GM12878 (cell line): ENCODE measurements at regions of chr11 and their contacts with region 1.

Region 1: DNA sequence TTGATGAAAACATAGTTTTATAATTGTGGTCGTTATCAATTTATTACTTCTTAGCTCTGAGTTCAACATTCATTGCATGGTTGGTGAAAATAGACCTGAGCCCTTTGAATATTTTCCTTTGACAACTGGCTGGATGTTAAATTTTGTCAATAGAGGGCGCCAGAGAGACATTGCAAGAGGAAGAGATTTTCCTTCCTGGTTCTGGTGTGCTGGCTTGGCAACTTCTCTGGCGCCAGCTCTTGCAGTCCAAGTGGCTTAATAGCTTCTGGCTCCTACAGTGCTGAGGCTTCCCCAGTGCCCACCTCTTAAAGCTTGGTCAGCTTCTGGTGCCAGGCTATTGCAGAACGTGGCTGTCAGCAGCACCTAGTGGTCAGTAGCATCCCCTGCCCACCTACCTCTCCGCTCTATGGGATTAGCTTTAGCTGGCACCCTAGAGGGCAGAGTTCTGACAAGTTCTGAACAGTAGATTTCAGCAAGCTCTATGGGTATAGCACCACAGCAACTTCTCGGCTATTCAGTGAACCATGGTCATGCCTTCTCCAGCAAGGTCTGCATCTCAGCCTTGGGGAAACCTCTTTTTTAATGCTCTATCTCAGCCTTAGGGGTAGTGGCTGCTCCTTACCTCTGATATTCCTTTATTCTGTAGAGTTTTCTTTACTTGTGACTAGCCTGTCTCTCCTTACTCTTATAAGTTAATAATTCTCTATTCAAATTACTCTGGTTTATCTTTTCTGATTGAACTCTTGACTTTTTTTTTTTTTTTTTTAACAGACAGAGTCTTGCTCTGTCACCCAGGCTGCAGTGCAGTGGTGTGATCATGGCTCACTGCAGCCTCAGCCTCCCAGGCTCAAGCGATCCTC is 59.4 kb downstream of the ACER3 start:
- DNase-seq: peak; percentile 43
- ATAC-seq: peak; percentile 90
- H3K4me3 ChIP-seq: 0 out of 2 replicates have a peak overlapping the region, but pooled peaks have one; percentile 18
- H3K27ac ChIP-seq: no peak overlapping the region
- H3K4me1 ChIP-seq: no peaks in the 10 kb centered on the region
- H3K27me3 ChIP-seq: no peaks in the 10 kb centered on the region
- CTCF ChIP-seq: peak; percentile 78 to 91 (median 83)
- EP300 ChIP-seq: no peak
- POLR2A ChIP-seq: no peak
- RAD21 ChIP-seq: peak; percentile 85

Region 2: GRCh38 chr11:76734456-76735420 is 185.4 kb before region 1 on chr11:
- CTCF ChIA-PET with region 1: interaction called, 8 read pairs
- POLR2A ChIA-PET with region 1: no interaction called
- RAD21 ChIA-PET with region 1: interaction called, 7 read pairs
- SMC1A ChIA-PET with region 1: interaction called, 11 read pairs
- in situ Hi-C with region 1: no loop called
- intact Hi-C with region 1: loop called (anchors 1 kb)
- DNase-seq: no peak
- ATAC-seq: no peak
- H3K4me3 ChIP-seq: no peak overlapping the region
- H3K27ac ChIP-seq: no peak overlapping the region
- H3K4me1 ChIP-seq: no peaks in the 10 kb centered on the region
- H3K27me3 ChIP-seq: peaks cover 0 to 7% of the 10 kb centered on the region in 2 experiments; a peak in 2 of 4 replicates
- CTCF ChIP-seq: no peak
- EP300 ChIP-seq: no peak
- POLR2A ChIP-seq: no peak
- RAD21 ChIP-seq: no peak

Region 3: DNA sequence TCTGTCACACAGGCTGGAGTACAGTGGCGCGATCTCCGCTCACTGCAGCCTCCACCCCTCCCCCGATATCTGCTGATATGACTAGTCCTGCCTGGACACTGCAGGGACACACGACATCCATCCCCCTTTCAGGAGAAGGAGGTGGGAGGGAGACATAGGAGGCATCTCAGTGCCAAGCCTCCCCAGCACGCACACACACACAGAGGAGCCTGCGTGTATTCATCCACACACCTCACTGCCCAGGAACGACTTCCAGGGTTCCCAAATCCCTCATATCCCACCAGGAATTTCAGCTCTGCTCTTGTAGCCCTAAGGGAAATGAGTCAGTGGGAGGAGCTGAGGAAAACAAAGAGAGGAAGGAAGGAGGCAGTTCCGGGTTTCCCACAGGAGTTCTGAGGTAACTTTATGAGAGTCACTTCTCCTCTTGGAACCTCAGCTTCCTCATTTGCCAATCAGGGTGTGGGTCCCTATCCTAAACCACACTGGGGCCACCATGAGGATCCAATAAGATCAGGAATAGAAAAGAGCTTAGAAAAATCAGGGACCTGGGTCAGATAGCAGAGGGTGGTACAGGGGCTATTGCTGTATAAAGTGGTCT is 96.5 kb before region 1 on chr11:
- CTCF ChIA-PET with region 1: interaction called, 18 read pairs
- POLR2A ChIA-PET with region 1: no interaction called
- RAD21 ChIA-PET with region 1: interaction called, 7 read pairs
- SMC1A ChIA-PET with region 1: interaction called, 7 read pairs
- in situ Hi-C with region 1: no loop called
- intact Hi-C with region 1: no loop called
- DNase-seq: no peak
- ATAC-seq: no peak
- H3K4me3 ChIP-seq: no peak overlapping the region
- H3K27ac ChIP-seq: no peak overlapping the region
- H3K4me1 ChIP-seq: no peaks in the 10 kb centered on the region
- H3K27me3 ChIP-seq: no peaks in the 10 kb centered on the region
- CTCF ChIP-seq: no peak
- EP300 ChIP-seq: no peak
- POLR2A ChIP-seq: no peak
- RAD21 ChIP-seq: no peak

Region 4: DNA sequence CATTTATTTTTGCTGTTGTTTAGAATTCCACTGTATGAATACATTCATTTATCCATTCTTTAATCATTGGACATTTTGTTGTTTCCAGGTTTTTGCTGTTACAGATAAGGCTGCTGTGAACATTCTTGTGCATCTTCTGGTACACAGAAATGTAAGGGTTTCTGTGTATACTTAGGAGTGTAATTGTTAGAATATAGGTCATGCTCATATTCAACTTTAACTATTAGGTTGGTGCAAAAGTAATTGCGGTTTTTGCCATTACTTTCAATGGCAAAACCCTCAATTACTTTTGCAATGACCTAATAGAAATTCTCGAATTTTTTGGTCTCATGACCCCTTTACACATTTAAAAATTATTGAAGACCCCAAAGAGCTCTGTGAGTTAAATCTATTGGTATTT is 42.1 kb before region 1 on chr11:
- CTCF ChIA-PET with region 1: interaction called, 10 read pairs
- POLR2A ChIA-PET with region 1: no interaction called
- RAD21 ChIA-PET with region 1: no interaction called
- SMC1A ChIA-PET with region 1: interaction called, 3 read pairs
- in situ Hi-C with region 1: no loop called
- intact Hi-C with region 1: no loop called
- DNase-seq: no peak
- ATAC-seq: no peak
- H3K4me3 ChIP-seq: no peak overlapping the region
- H3K27ac ChIP-seq: no peak overlapping the region
- H3K4me1 ChIP-seq: no peaks in the 10 kb centered on the region
- H3K27me3 ChIP-seq: no peaks in the 10 kb centered on the region
- CTCF ChIP-seq: no peak
- EP300 ChIP-seq: no peak
- POLR2A ChIP-seq: no peak
- RAD21 ChIP-seq: no peak

Region 5: DNA sequence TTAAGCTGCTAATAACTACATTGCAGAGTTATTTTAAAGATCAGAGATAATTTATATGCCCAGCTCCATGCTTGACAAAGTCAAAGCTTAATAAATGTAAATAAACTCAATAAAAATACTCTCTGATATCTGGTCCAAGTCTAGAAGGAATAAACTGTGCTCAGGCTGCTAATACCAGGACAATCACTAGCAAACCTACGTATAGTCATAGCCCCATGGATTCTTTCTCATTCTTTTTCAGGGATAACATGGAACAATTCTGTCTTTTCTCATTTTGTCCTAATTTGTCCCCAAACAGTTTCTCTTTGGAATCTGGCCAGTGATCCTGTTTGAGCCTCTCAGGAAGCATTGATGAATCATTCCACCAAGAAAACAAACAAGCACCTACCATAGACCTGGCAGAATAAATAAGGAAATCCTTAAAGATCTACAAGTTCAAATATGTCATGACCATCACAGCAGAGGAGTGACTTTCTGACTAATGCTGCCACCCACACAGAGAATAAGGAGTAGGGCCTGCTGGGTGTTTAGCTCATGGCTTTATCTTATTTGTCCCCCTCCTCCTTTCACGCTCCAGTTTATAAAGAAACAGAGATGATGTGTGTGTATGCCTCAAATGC is 100.0 kb after region 1 on chr11:
- CTCF ChIA-PET with region 1: interaction called, 23 read pairs
- POLR2A ChIA-PET with region 1: no interaction called
- RAD21 ChIA-PET with region 1: interaction called, 6 read pairs
- SMC1A ChIA-PET with region 1: interaction called, 11 read pairs
- in situ Hi-C with region 1: no loop called
- intact Hi-C with region 1: no loop called
- DNase-seq: no peak
- ATAC-seq: no peak
- H3K4me3 ChIP-seq: no peak overlapping the region
- H3K27ac ChIP-seq: no peak overlapping the region
- H3K4me1 ChIP-seq: no peaks in the 10 kb centered on the region
- H3K27me3 ChIP-seq: no peaks in the 10 kb centered on the region
- CTCF ChIP-seq: no peak
- EP300 ChIP-seq: no peak
- POLR2A ChIP-seq: no peak
- RAD21 ChIP-seq: no peak

Region 6: GRCh38 chr11:77047007-77047927 is 127.2 kb after region 1 on chr11:
- CTCF ChIA-PET with region 1: interaction called, 33 read pairs
- POLR2A ChIA-PET with region 1: no interaction called
- RAD21 ChIA-PET with region 1: interaction called, 19 read pairs
- SMC1A ChIA-PET with region 1: interaction called, 15 read pairs
- in situ Hi-C with region 1: no loop called
- intact Hi-C with region 1: no loop called
- DNase-seq: peak; percentile 92
- ATAC-seq: peak; percentile 97
- H3K4me3 ChIP-seq: peak overlapping the region; percentile 15; the same call in 1 of the 2 replicates
- H3K27ac ChIP-seq: no peak overlapping the region
- H3K4me1 ChIP-seq: no peaks in the 10 kb centered on the region; the same call in 1 of the 2 replicates
- H3K27me3 ChIP-seq: no peaks in the 10 kb centered on the region; a peak in 1 of 4 replicates
- CTCF ChIP-seq: peak; percentile 45 to 70 (median 59); a peak in 5 of 6 replicates
- EP300 ChIP-seq: no peak; a peak in 1 of 4 replicates
- POLR2A ChIP-seq: no peak
- RAD21 ChIP-seq: peak; percentile 58